ENCODE measurements at regions of chr5 and their contacts with region 1.

Region 1: DNA sequence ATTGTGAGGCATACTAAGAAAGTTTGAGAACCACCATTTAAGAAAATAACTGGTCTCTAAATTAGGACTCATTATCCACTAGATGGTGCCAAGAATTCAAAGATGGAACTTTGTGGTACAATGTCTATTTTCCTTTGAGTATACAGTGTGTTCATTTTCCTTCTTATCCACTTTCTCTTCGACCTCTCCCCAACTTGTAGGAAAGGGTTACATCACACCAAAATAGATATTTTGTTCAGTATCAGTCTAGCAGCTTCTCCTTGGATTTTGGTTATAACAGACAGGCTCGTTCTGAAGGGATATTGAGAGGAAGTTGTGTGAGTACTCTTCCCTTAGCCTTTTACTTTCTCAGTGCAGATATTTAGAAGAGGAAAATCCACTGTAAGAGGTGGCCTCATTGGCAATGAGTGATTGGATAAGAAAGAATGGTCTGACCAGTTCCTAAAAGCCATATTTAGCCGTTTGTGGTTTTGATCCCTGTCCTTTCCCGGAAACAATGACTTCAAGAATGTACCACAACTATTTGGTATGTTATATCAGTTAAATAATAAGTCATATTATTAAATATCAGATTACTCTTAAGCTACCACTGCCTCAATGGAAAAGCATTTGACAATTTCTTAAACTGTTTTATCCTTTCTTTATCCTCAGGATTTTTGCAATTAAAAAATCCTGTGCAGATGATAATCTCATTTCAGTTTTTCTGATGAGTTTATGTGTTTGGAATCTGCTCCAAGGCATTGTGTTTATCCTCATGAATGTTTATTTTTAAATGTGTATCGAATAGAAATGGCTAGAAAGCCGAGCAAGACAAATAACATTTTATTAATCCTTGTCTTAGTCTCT is 69.0 kb upstream of the GRAMD2B start:
- DNase-seq: no peak
- H3K4me3 ChIP-seq: peak overlapping the region in 1 of 4 donors; percentile 37
- H3K27ac ChIP-seq: peak overlapping the region in 4 of 5 donors; percentile 32 to 81 (median 50)
- H3K4me1 ChIP-seq: no peaks in the 10 kb centered on the region
- H3K27me3 ChIP-seq: no peaks in the 10 kb centered on the region
- CTCF ChIP-seq: peak; percentile 15 to 87 (median 68)
- POLR2A ChIP-seq: no peak

Region 2: DNA sequence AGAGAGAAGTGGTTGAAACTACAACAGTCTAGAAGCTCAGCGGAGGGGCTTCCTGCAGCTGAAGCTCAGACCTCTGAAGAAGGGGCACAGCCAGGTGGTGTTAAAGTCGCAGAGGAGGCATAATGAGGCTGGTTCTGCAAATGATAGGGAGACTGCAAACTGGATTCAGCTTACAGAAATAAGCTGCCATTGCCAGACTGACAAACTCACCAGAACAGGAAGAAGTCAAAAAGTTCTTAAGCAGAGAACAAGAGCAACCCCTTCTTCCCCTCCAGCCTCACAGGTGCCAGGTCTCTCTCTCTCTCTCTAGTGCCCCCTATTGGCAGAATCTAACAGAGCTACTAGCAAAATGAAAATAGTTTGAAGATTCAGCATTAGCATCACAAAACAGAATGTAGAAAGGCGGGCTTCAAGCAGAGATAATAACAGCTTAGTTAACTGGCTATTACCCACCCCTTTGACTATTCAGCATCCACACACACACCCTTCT is 145.7 kb after region 1 on chr5:
- intact Hi-C with region 1: loop called (anchors 5 to 10 kb)
- DNase-seq: no peak
- H3K4me3 ChIP-seq: no peak overlapping the region
- H3K27ac ChIP-seq: peak overlapping the region in 2 of 5 donors; percentile 41 to 42
- H3K4me1 ChIP-seq: peaks cover 17 to 43% of the 10 kb centered on the region in 2 donors
- H3K27me3 ChIP-seq: no peaks in the 10 kb centered on the region
- CTCF ChIP-seq: peak; percentile 39 to 48 (median 44)
- POLR2A ChIP-seq: no peak

Region 3: DNA sequence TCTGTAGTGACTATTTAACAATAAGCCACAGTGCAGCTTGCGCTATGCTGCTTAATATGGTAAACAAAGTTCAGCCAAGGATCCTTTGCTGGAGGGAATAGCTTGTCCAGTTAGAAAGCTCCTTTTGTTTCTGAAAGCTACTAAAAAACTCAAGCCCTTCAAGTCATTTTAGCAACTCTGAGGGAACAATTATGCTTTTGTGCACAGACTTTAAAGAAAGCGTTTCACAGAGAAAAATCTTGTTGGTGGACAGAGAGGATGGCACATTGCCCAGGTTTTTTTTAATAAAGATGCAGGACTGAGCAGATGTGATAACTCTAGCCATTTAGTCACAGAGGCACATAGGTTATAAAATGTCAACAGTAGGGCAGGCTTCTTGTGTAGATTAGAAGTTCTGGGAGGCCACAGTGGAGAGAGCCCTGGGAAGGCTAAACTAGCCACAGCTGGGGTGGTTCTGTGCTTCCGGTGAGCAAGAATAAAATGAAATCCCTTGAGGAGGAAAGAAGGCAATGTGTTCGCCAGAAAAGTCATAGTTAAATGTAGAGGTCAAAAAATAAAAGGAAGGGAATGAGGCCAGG is 177.4 kb after region 1 on chr5:
- intact Hi-C with region 1: loop called (anchors 5 to 10 kb)
- DNase-seq: no peak
- H3K4me3 ChIP-seq: no peak overlapping the region
- H3K27ac ChIP-seq: peak overlapping the region in 3 of 5 donors; percentile 14 to 77 (median 62)
- H3K4me1 ChIP-seq: peaks cover 0 to 12% of the 10 kb centered on the region in 2 donors
- H3K27me3 ChIP-seq: no peaks in the 10 kb centered on the region
- CTCF ChIP-seq: no peak
- POLR2A ChIP-seq: no peak

Region 4: DNA sequence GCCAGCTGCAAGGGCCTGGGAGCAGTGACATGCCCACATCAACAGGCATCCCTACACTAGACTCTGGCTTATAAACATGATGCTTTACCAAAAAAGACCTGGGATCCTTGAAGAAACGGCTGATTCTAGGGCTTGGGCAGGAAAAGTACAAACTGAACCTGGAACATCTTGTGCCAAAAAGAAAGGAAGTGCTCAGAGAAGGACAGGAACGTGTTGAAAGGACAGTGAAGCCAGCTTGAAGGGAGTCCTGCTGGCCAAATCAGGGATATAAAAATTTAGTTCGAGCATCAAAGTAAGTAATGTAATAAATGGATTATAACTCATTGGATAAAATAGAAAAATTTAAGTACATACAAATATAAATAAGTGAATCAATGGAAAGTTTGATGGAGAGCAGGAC is 182.6 kb after region 1 on chr5:
- intact Hi-C with region 1: loop called (anchors 5 to 10 kb)
- DNase-seq: no peak
- H3K4me3 ChIP-seq: no peak overlapping the region
- H3K27ac ChIP-seq: peak overlapping the region in 1 of 5 donors; percentile 1
- H3K4me1 ChIP-seq: peaks cover 0 to 13% of the 10 kb centered on the region in 2 donors
- H3K27me3 ChIP-seq: no peaks in the 10 kb centered on the region
- CTCF ChIP-seq: peak in 5 of 6 experiments; percentile 13 to 40 (median 34)
- POLR2A ChIP-seq: no peak